Activated T-helper 2 cell treated with anti-CD3 and anti-CD28 coated beads, Interferon-gamma antibody, Interleukin-2, Interleukin-4, amounts not matched to agents 10 μg/mL and 5 μg/mL and 100 μg/mL, durations not matched to agents 14 hours and 24 hours and 36 hours (primary cell): ENCODE measurements at regions of chr15 and their contacts with region 1.

Region 1: DNA sequence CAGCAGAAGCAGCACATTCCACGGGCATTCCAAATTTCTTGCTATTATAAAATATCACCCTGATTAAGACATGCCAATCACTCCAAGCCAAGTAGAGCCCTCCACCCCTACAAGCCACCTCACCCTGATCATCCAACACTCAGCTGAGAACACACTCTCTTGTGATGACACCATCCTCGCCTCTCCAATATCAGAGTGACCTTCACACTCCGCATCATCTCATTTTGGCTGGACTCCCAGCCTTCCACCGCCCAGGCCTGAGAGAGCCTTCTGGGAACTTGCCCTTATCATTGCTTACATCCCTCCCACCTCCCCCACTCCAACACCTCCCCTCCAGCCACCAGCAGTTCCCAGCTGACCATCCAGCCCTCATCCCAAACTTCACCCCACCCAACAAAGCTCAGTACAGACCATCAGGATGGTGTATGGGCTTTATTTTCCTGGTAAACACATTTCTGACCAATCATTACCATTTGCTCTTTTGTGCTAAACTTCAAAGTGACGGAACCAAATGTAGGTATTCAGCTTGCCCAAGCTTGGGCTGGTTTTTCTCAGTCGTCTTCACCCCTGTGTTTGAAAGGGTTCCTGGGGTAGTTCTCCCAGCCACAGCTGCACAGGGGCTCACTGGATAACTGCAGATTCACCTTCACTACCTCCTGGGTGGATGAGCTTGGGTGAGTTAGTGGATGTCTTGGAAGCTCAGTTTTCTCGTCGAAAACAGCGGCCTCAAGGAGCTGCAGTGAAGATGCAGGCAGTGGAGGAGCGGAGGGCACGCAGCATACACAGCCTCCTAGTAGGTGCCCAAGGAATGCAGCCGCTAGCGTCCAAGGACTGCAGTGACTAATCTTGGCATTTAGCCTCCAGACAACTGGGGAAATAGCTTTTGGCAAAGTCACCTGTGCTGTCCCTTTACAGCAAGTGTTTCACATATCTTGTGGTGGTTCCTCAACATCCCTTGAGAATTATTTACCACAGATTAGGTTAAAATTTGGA is 115.1 kb downstream of the LIPC start:
- DNase-seq: no peak
- H3K4me3 Mint-ChIP-seq: no peak overlapping the region
- H3K27ac Mint-ChIP-seq: peak overlapping the region; percentile 97
- H3K4me1 Mint-ChIP-seq: peaks cover 49% of the 10 kb centered on the region
- H3K27me3 Mint-ChIP-seq: no peaks in the 10 kb centered on the region

Region 2: DNA sequence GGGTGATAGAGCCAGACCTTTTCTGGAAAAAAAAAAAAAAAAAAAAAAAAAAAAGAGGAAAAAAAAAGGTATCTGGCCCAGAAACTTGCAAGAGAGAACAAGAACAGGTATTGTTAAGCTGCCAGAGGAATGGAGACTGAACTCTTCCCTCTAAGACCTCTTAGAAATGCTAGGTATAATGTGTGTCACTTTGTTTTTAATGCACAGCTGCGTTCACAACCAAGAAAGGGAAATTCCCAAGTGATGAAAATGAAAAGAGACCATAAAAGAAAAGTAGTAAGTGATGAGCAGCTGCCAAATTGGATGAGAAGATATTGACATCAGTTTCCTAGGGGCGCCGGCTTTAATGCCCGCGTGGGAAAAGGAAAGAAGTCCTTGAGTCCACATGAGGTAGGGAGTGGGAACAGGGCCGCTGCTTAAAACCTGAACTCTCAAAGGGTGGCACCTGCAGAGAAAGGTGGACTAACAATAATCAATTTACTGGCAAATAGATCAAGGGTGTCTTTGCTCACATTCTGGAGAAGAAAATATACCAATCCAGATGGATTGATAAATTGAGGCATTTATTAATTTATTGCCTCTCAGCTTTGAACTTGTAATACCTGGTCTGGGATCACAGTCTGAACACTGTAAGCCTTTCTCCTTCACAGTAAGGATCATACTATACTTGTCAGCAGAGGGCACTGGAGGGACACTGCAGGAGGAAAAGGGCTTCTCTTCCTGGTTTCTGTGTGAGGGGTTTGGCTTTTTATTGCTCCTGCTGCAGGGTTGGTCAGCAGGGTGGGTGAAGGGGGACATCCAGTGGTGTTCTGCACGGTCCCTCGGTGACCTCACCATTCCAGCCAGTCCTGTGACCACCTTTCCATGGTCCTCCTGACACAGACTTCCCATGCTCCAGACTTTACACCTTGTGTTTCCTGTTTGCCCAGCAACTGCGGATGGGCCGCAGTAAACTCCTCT is 277.2 kb before region 1 on chr15:
- intact Hi-C with region 1: loop called (anchors 10 kb)
- DNase-seq: no peak
- H3K4me3 Mint-ChIP-seq: no peak overlapping the region
- H3K27ac Mint-ChIP-seq: no peak overlapping the region
- H3K4me1 Mint-ChIP-seq: peaks cover 8% of the 10 kb centered on the region
- H3K27me3 Mint-ChIP-seq: no peaks in the 10 kb centered on the region

Region 3: DNA sequence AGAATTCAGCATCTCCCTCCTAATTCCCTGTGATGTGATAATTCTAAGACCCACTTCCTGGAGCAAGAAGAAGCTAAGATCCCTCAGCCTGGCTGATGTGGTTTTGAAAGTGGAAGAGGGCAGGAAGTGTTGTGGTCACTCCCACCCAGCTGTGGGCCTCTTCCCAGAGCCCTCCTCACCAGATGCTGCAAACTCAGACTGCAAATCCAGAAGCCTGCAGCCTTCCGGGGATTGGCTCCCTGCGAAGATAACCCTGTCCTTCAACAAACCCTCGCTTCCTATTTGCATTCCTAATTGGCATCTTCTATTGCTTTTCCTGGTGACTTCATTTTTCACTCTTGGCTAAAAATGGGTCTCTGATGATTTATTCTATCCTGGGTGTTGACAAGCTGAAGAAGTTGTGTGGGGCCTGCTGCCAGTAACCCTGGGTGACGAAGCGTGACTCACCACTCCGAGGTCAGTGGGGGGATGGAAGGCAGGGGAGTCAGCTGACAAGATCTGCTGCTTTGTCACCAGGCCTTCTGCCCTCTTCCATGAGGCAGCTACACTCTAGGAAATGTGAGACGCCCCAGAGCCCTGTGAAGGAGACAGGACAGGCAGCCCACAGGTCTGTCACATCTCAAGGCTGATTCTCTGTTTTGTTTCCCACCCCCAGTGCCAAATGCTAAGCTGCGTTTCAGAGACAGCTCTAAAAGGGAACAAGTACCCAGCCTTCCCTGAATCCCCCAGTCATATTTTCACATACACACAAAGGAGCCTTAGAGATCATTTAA is 214.8 kb before region 1 on chr15:
- intact Hi-C with region 1: loop called (anchors 2 kb)
- DNase-seq: peak; percentile 76
- H3K4me3 Mint-ChIP-seq: peak overlapping the region; percentile 32
- H3K27ac Mint-ChIP-seq: peak overlapping the region; percentile 96
- H3K4me1 Mint-ChIP-seq: peaks cover 43% of the 10 kb centered on the region
- H3K27me3 Mint-ChIP-seq: no peaks in the 10 kb centered on the region

Region 4: DNA sequence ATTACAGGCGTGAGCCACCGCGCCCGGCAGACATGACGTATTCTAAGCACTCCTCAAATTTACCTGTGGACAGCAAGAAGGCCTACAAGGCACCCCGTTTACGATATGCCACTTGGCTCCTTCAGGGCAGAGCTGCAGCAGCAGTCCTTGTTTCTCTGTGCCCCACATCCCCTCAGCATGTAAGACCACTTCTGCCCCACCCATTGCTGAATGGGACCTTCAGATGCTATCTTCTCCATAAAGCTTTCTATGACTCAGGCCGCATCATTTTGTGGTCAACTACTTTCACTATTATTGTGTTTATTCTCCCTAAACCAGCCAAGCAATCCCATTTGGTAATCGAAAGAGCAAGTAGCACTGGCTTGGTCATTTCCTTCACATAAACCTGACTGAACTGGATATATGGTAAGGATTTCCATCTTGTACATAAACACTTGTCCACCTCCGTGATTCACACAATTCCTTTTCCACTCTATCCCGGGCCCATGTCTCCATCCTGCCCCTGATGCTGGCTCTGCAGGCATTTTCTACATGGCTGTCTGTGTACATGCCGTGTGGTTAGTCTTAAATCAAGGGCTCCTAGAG is 89.5 kb before region 1 on chr15:
- intact Hi-C with region 1: loop called (anchors 1 kb)
- DNase-seq: peak; percentile 54
- H3K4me3 Mint-ChIP-seq: no peak overlapping the region
- H3K27ac Mint-ChIP-seq: peak overlapping the region; percentile 91
- H3K4me1 Mint-ChIP-seq: peaks cover 78% of the 10 kb centered on the region
- H3K27me3 Mint-ChIP-seq: no peaks in the 10 kb centered on the region

Region 5: DNA sequence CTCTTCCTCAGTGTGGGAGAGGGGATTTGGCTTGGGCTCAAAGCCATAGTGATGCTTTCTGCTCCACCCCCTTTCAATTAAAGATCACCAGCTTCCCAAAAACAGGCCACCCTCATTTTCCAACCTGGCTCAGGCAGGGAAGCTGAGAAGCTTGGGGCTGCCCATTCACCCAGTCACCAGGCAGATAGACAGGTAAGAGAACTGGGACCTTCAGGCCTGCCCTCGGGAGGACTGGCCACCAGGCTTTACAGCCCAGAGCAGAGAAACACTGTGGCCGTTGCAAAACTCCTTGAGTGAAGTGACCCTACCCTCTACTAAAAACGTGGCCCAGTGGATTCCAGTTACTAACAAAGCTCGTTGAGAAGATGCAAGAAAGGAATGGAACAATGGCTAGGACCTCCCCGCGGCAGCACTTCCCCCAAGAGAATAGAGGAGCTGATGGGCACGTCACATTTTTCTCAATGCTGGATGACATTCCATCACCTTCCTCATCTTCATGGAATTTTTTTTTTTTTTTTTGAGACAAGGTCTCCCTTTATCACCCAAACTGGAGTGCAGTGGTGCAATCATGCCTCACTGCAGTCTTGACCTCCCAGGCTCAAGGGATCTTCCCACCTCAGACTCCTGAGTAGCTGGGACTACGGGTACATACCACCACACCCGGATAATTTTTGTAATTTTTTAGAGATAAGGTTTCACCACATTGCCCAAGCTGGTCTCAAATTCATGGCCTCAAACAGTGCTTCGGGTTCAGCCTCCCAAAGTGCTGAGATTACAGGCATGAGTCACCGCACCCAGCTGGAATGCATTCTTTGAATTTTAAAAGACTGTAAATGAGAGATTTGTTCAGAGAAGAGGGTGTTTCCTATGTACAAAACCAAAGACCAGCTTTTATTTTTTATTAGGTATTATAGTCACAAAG is 77.2 kb before region 1 on chr15:
- intact Hi-C with region 1: loop called (anchors 5 kb)
- DNase-seq: no peak
- H3K4me3 Mint-ChIP-seq: no peak overlapping the region
- H3K27ac Mint-ChIP-seq: no peak overlapping the region
- H3K4me1 Mint-ChIP-seq: peaks cover 48% of the 10 kb centered on the region
- H3K27me3 Mint-ChIP-seq: no peaks in the 10 kb centered on the region

Region 6: GRCh38 chr15:58517682-58518525 is 29.0 kb before region 1 on chr15:
- intact Hi-C with region 1: loop called (anchors 1 kb)
- DNase-seq: no peak
- H3K4me3 Mint-ChIP-seq: peak overlapping the region; percentile 18
- H3K27ac Mint-ChIP-seq: peak overlapping the region; percentile 84
- H3K4me1 Mint-ChIP-seq: peaks cover 54% of the 10 kb centered on the region
- H3K27me3 Mint-ChIP-seq: no peaks in the 10 kb centered on the region

Region 7: DNA sequence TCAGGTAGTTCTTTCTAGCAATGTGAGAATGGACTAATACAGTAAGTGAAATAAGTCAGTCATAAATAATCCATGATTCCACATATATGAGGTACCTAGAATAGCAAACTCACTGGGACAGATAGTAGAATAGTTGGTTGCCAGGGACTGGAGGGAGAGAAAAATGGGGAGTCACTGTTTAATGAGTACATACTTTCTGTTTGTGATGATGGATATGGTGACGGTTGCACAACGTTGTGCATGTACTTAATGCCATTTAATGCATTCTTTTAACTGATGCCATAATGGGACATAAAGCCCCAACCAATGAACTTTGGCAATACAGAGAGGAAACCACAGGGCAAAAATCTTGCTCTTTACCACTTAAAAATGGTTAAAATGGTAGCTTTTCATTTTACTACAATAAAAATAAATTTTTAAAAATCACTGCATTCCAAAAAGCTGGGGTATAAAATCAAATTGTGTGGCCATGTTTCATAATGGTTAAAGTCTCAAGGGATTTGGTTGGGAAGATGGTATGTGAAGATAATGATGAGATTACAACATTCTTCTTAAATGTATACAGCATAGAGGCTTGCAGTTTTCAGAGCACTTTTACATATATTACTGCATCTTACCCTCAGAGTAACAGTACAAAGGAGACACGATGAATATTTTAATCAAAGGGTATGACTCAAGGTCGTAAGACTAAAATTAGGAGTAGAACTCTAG is 157.4 kb after region 1 on chr15:
- intact Hi-C with region 1: loop called (anchors 5 kb)
- DNase-seq: no peak
- H3K4me3 Mint-ChIP-seq: no peak overlapping the region
- H3K27ac Mint-ChIP-seq: no peak overlapping the region
- H3K4me1 Mint-ChIP-seq: peaks cover 71% of the 10 kb centered on the region
- H3K27me3 Mint-ChIP-seq: no peaks in the 10 kb centered on the region